BJ (cell line): ENCODE measurements at regions of chr14 and their contacts with region 1.

Region 1: GRCh38 chr14:22886500-22887259 is 3.7 kb downstream of the REM2 start:
- DNase-seq: no peak
- H3K4me3 ChIP-seq: peak overlapping the region; percentile 53
- H3K27me3 ChIP-seq: no peaks in the 10 kb centered on the region
- CTCF ChIP-seq: 0 out of 2 replicates have a peak, but pooled peaks have one; percentile 18

Region 2: GRCh38 chr14:22872033-22872832 is 14.4 kb before region 1 on chr14:
- CTCF ChIA-PET with region 1: interaction called, 76 read pairs
- POLR2A ChIA-PET with region 1: interaction called, 5 read pairs
- DNase-seq: no peak
- H3K4me3 ChIP-seq: peak overlapping the region; percentile 97
- H3K27me3 ChIP-seq: no peaks in the 10 kb centered on the region
- CTCF ChIP-seq: peak; percentile 97